HEK293 (cell line): ENCODE measurements at regions of chr6 and their contacts with region 1.

Region 1: DNA sequence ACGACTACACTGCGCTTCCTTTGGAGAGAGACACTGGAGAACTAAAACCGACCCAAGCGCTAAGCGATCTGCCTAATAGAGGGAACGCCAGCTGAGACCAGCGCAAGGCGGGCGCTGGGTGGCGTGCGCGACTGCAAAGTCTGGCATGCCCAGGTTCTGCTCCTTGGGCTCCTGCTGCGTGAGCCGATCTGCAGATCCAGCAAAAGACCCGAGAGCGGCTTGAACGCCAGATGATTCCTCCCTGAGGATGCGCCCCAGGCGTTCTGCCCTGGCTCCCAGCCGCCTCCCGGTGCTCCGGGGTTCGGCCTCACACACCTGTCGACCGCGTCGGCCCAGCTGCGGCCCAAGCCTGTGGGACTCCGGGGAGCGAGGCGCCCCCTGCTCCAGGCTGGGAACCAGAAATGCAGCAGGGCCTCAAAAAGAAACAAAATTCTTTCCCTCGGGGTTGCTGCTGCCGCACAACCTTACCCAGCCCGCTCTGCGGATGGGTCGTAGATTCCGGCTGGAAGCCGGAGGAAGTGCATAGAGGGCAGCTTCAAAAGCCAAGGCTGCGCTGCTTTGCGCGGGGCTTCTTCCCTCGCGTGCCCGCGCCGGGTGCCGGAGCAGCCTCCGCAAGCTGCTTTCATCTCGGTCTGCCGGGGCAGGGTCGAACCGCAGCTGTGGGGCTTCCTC is 17.9 kb upstream of the PRDM13 start:
- H3K4me3 ChIP-seq: peak overlapping the region; percentile 51
- H3K27ac ChIP-seq: peak overlapping the region; percentile 50; the same call in 1 of the 2 replicates
- H3K4me1 ChIP-seq: no peaks in the 10 kb centered on the region; the same call in 1 of the 2 replicates
- CTCF ChIP-seq: peak; percentile 92

Region 2: GRCh38 chr6:99575544-99576227 is 13.1 kb before region 1 on chr6:
- CTCF ChIA-PET with region 1: interaction called, 10 read pairs
- POLR2A ChIA-PET with region 1: no interaction called
- H3K4me3 ChIP-seq: no peak overlapping the region
- H3K27ac ChIP-seq: no peak overlapping the region
- H3K4me1 ChIP-seq: no peaks in the 10 kb centered on the region
- CTCF ChIP-seq: no peak

Region 3: DNA sequence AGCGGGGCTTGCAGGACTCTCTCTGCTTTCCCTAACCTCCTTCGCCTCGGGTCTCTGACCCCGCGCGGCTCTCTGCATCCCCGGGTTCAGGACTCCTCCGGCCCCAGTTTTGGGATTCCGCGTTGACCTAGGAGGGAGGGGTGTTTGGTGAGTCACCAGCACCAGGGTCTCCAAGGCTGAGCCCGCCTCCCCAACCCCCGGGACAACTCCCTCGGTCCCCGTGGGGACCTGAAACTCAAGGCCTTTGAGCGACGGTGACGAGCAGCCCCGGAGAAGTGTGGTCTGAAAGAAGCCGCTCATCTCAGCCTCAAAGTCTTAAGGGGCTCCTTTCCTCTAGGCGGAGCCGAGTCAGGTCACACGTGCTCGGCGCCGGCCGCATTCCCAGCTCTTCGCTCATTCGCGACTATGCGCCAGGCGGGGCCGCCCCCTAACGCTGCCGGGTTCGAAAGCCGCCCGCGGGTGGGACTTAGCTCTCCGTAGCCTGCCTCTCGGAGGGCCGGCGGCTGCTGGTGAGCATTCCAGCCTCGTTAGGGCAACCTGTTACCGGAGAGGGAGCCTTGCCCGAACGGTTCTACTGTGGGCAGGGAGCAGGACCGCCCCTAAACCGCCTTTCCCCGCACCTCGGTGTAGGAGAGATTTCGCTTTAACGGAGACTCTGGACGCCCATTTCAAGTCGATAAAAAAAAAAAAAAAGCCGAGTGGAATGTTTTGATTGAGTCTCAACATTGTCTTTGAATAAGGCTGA is 14.8 kb after region 1 on chr6:
- CTCF ChIA-PET with region 1: interaction called, 10 read pairs
- POLR2A ChIA-PET with region 1: interaction called, 4 read pairs
- H3K4me3 ChIP-seq: peak overlapping the region; percentile 16
- H3K27ac ChIP-seq: no peak overlapping the region
- H3K4me1 ChIP-seq: no peaks in the 10 kb centered on the region
- CTCF ChIP-seq: no peak